PC-9 (cell line): ENCODE measurements at regions of chr6 and their contacts with region 1.

Region 1: DNA sequence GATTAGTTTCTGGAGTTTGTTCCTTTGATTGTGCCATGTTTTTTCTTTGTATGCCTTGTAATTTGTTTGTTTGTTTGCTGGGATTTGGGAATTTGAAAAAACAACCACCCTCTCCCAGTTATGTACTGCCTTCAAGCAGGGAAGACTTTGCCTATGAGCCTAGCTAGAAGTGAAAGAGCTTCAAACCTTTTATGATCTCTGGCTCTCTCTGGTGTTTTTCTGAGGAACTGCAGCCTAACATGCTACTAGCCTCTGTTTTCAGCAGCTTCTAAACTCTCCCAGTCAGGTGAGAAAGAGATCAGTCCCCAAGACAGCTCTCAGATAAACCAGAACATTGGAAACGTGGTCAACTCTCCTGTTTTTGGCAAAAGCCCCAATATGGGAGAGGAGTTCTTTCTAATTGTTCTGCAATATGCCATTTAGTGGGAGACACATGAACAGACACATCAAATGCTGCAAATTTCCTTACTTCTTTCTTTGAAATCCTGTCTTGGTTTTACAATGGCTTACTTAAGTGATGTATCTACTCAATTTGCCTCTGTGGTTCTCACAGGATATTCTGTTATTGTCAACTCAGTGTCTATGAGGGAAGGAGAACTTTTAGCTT is 58.9 kb upstream of the SERINC1 start:
- DNase-seq: peak; percentile 44 to 68
- H3K4me3 ChIP-seq: no peak overlapping the region
- H3K27ac ChIP-seq: no peak overlapping the region
- H3K4me1 ChIP-seq: no peaks in the 10 kb centered on the region
- H3K27me3 ChIP-seq: no peaks in the 10 kb centered on the region
- CTCF ChIP-seq: peak; percentile 98

Region 2: DNA sequence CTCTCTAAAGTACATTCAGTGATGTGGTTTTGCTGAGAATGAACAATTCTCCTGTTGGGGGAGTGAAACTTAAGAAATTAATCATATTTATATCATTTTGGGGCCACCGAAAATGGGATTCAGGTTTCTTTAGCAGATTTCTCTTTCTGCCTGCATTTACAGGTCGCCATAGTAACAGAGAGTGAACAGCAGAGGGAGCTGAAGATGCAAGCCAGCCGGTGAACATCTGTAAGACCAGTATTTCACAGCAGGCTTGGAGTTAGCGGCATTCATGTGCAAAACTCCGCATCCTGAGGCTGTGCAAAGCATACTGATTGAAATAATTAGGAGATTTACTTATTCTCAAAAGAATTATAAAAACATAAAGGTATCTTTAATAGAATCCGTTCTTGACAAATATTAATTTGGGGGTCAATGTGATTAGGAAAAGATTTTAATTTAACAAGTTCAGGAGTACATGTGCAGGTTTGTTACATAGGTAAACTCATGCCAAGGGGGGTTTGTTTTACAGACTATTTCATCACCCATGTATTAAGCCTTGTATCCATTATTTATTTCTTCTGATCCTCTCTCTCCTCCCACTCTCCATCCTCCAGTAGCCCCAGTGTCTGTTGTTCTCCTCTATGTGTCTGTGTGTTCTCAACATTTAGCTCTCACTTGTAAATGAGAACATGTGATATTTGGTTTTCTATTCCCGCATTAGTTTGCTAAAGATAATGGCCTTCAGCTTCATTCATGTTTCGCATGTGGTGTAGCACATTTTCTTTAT is 148.9 kb before region 1 on chr6:
- CTCF ChIA-PET with region 1: no interaction called
- POLR2A ChIA-PET with region 1: no interaction called
- intact Hi-C with region 1: loop called (anchors 1 kb)
- DNase-seq: peak in 1 of 2 experiments; percentile 34
- H3K4me3 ChIP-seq: no peak overlapping the region
- H3K27ac ChIP-seq: no peak overlapping the region
- H3K4me1 ChIP-seq: 0 out of 2 replicates have a peak, but pooled peaks cover 2% of the 10 kb centered on the region
- H3K27me3 ChIP-seq: no peaks in the 10 kb centered on the region
- CTCF ChIP-seq: peak; percentile 84

Region 3: DNA sequence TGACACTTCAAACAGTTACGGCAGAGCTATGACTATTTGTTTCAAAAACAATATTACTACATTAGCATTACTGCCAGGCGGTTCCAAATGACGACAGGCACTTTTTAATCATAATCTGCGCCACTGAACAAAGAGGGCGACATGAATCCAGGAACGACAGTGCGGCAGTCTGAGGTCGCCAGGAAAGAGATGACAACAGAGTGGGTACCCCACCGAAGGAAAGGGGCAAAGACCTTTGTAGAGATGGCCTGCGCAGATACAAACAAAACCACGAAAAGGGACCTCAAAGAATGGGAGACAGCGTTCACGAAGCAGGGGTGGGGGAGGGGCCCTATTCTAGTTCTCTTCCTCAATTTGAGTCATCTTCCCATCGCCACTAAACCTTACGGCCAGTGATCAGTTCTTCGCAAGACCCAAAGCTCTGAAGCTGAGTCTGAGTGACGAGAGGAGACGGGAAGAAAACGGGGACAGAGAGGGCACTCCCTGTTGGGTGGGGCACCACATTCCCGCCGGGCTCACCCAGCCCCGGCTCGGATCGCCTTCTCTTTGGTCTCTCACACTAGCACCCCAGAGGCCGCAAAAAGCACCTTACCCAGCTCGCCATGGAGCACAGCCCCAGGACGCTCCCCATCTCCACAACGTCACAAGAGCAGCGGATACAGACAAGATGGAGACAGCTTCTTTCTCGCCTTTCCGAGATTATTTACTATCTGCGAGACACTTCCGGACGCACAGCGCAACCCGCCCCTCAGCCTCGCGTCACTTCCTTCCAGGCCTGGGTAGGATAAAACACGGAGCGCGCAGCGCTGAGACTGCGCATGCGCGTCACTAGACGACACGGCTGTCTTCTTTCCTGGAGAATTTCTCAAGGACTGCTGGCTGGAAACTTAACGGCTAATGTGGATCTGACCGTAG is 59.2 kb before region 1 on chr6 and contains the start of gene SERINC1:
- CTCF ChIA-PET with region 1: no interaction called
- POLR2A ChIA-PET with region 1: no interaction called
- intact Hi-C with region 1: loop called (anchors 5 kb)
- DNase-seq: peak; percentile 81 to 89
- H3K4me3 ChIP-seq: peak within 1 kb of the TSS; percentile 93
- H3K27ac ChIP-seq: peak within 1 kb of the TSS; percentile 79
- H3K4me1 ChIP-seq: peaks cover 18% of the 10 kb centered on the region
- H3K27me3 ChIP-seq: no peaks in the 10 kb centered on the region
- CTCF ChIP-seq: no peak
- total RNA-seq, gene SERINC1: 48.1 and 57.6 TPM in 2 replicates

Region 4: GRCh38 chr6:122491919-122492555 is 38.5 kb before region 1 on chr6:
- CTCF ChIA-PET with region 1: interaction called, 23 read pairs
- POLR2A ChIA-PET with region 1: no interaction called
- intact Hi-C with region 1: loop called (anchors 1 kb)
- DNase-seq: peak; percentile 54 to 62
- H3K4me3 ChIP-seq: no peak overlapping the region
- H3K27ac ChIP-seq: no peak overlapping the region
- H3K4me1 ChIP-seq: peaks cover 13% of the 10 kb centered on the region
- H3K27me3 ChIP-seq: no peaks in the 10 kb centered on the region
- CTCF ChIP-seq: peak; percentile 96

Region 5: GRCh38 chr6:122717350-122717749 is 186.8 kb after region 1 on chr6:
- CTCF ChIA-PET with region 1: no interaction called
- POLR2A ChIA-PET with region 1: no interaction called
- intact Hi-C with region 1: loop called (anchors 5 kb)
- DNase-seq: no peak
- H3K4me3 ChIP-seq: no peak overlapping the region
- H3K27ac ChIP-seq: no peak overlapping the region
- H3K4me1 ChIP-seq: peaks cover 11% of the 10 kb centered on the region
- H3K27me3 ChIP-seq: no peaks in the 10 kb centered on the region
- CTCF ChIP-seq: no peak